Dorsolateral prefrontal cortex (tissue), 120 donors: ENCODE measurements at regions of chr11 and their contacts with region 1.

Region 1: GRCh38 chr11:131867457-131868257 is 497.2 kb downstream of the NTM start:
- DNase-seq: peak; percentile 66 to 89 (median 84)
- H3K4me3 ChIP-seq: peak overlapping the region in 3 of 59 donors; percentile 5 to 12 (median 7)
- H3K27ac ChIP-seq: peak overlapping the region in 28 of 59 donors; percentile 26 to 89 (median 60)
- H3K27me3 ChIP-seq: no peaks in the 10 kb centered on the region
- CTCF ChIP-seq: peak; percentile 31 to 93 (median 80)

Region 2: GRCh38 chr11:131694526-131695424 is 172.9 kb before region 1 on chr11:
- intact Hi-C with region 1: loop called in 1 of 2 experiments (anchors 5 kb)
- DNase-seq: peak; percentile 73 to 93 (median 80)
- H3K4me3 ChIP-seq: peak overlapping the region in 41 of 59 donors; percentile 0 to 53 (median 25)
- H3K27ac ChIP-seq: peak overlapping the region in 52 of 59 donors; percentile 2 to 83 (median 59)
- H3K27me3 ChIP-seq: no peaks in the 10 kb centered on the region
- CTCF ChIP-seq: peak; percentile 66 to 99 (median 97)

Region 3: DNA sequence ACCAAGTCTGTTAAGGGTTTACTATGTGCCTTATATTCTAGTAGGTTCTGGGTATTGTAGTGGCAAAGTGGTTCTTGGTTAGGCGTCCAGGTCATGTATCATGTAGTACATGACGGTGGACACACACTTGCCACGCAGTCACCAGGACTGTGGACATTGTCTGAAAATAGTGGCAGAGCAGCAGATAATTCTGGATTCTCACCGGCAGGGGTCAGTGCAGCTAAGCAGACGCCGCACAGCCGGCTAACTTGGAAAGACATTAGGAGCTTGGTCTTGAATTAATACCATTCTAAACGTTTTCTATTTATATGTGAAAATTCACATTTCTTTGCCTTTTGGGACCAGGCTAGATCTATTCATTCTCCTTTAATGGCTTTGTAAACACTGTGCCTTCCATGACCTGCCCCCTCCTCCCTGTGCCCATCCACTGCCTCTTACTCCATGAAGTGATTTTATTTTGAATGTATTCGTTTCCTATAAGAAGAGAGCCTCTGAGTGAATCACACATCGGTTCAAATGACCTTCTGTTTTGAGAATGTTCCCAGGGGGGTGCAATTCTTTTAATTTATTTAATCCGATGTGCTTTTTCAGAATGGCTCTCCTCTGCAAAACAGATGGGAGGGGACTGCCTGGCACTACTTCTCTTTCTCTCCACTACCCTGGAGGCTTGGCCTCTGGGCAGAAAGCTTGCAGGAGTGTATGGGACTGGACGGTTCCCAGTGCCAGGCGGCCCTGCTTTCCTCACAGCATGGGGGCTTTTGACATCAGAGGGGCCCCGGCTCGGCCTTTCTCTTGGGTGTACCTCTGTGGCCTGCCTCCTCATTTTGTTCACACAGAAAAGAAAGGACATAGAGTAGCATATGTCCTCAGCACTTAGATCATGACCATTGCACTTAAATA is 119.3 kb before region 1 on chr11:
- intact Hi-C with region 1: loop called in 1 of 2 experiments (anchors 5 kb)
- DNase-seq: peak; percentile 57 to 86 (median 80)
- H3K4me3 ChIP-seq: no peak overlapping the region
- H3K27ac ChIP-seq: peak overlapping the region in 12 of 59 donors; percentile 5 to 68 (median 20)
- H3K27me3 ChIP-seq: no peaks in the 10 kb centered on the region
- CTCF ChIP-seq: peak; percentile 74 to 96 (median 90)

Region 4: GRCh38 chr11:131910523-131911387 is 43.1 kb after region 1 on chr11:
- intact Hi-C with region 1: loop called in 1 of 2 experiments (anchors 2 kb)
- DNase-seq: peak in 3 of 10 donors; percentile 62 to 71 (median 64)
- H3K4me3 ChIP-seq: peak overlapping the region; percentile 37 to 78 (median 62)
- H3K27ac ChIP-seq: peak overlapping the region in 49 of 59 donors; percentile 21 to 91 (median 74)
- H3K27me3 ChIP-seq: peaks cover 0 to 16% (median 0%) of the 10 kb centered on the region in 45 donors
- CTCF ChIP-seq: peak in 1 of 56 donors; percentile 3

Region 5: GRCh38 chr11:131985846-131986301 is 118.2 kb after region 1 on chr11:
- intact Hi-C with region 1: no loop called
- DNase-seq: no peak
- H3K4me3 ChIP-seq: no peak overlapping the region
- H3K27ac ChIP-seq: peak overlapping the region in 2 of 59 donors; percentile 35 to 36
- H3K27me3 ChIP-seq: no peaks in the 10 kb centered on the region
- CTCF ChIP-seq: no peak

Region 6: DNA sequence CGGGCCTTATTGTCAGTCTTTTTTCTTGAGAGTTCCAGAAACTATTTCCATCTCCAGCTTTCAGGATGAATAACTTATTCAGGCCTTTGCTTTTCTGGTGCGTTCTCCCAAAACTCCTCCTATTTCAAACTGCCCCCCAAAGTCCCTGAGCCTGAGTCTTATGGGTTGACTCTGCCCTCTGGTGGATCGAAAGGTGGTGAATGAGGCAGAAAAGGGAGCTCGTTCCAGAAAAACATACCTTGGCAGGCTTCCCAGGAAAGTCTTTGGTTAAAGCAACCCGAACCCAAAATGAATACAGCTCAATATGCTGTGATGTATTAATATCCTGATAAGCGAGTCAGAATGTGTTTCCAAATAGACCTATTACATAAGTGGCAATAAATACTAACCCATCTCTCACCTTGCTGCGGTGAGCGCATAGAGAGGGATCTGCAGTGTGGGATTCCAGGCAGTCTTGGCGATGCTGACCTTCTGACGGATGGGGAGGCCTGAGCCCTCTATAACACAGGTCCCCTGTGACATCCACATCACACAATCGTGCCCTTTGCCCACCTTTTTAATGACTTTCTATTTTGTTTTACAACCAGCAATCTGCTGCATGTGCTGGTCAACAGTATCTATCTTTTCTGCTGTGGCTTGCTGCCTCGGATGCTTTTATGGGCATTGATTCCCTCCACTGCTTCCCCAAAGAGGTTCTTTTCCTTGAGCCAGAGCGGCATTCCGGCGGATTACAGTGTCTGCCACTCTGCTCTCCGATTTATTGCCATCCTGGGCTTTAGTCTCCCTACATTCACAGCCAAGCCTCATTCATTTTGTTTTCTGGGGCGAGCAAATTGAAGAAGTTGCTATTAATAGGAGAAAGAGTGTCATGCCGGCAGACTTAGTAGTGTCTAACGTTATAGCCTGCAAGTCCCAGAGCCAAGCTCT is 259.6 kb after region 1 on chr11:
- intact Hi-C with region 1: loop called (anchors 2 to 5 kb)
- DNase-seq: peak in 7 of 10 donors; percentile 47 to 87 (median 62)
- H3K4me3 ChIP-seq: peak overlapping the region in 58 of 59 donors; percentile 3 to 69 (median 49)
- H3K27ac ChIP-seq: peak overlapping the region in 54 of 59 donors; percentile 1 to 91 (median 76)
- H3K27me3 ChIP-seq: no peaks in the 10 kb centered on the region
- CTCF ChIP-seq: peak; percentile 36 to 86 (median 72)

Region 7: DNA sequence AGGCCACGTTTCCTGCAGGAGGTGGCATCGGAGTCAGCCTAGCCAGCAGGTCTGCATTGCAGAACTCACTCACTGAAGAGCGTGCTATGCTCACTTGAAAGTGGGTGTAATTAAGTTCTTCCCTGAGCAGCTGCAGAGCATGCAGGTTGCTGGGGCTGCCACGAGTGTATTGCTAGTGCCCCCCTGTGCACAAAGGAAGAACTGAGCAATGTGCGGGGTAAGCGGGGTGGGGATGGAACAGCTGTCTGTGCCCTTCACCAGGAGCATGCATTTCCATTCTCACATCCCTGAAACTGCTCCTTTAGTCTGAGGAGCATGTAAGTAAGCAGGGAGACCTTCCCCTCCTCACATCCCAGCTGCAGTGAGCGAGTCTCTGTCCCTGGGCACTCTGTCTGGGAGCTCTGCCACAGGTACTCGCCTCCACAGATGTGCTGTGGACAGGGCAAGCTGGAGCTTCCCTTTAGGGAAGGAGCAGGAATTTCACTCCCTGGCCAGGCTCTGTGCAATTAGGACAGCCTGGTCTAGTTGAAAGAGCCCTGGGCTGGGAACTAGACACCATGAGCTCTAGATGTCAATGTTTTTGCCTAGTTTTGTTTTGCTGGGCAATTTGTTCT is 534.5 kb after region 1 on chr11:
- intact Hi-C with region 1: loop called in 1 of 2 experiments (anchors 5 kb)
- DNase-seq: peak in 9 of 10 donors; percentile 45 to 72 (median 66)
- H3K4me3 ChIP-seq: no peak overlapping the region
- H3K27ac ChIP-seq: no peak overlapping the region
- H3K27me3 ChIP-seq: peaks cover 0 to 18% (median 0%) of the 10 kb centered on the region in 45 donors
- CTCF ChIP-seq: peak in 54 of 56 donors; percentile 34 to 73 (median 56)

Region 8: DNA sequence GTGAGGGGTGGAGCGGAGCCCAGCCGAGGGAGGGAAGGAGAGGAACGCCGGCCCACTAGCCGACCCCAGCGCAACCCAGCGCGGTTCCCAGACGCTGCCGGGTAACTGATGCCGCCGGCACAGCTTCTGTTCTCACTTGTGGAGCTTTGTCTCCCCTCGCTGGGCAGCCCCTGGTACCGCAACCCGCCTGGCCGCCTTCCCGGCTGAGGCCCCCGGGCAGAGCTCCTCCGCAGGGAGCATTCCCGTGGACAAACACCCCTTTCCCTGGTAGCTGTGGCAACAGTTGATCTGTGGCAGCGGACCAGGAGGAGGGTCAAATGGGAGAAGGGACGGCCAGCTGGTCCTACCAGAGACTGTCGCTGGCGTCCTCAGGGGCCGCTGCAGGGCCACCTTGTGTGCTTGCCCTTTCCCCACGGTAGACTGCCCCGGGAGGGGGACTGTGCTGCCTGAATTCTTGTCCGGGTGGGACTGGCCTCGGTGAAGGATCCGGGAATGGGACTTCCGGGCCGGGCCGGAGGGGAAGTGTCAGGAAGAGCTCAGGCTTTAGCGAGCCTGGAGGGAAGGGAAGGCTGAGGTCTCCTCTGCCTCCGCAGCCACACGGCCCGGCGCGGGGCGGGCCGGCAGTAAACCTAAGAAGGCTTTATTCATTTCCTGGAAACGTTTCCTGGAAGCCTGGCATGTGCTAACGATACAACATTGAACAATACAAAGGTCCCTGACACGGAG is 1196.7 kb after region 1 on chr11:
- intact Hi-C with region 1: loop called in 1 of 2 experiments (anchors 10 kb)
- DNase-seq: peak; percentile 46 to 84 (median 73)
- H3K4me3 ChIP-seq: peak overlapping the region in 58 of 59 donors; percentile 10 to 72 (median 53)
- H3K27ac ChIP-seq: peak overlapping the region in 26 of 59 donors; percentile 4 to 85 (median 45)
- H3K27me3 ChIP-seq: peaks cover 0 to 6% (median 0%) of the 10 kb centered on the region in 45 donors
- CTCF ChIP-seq: peak in 54 of 56 donors; percentile 23 to 84 (median 68)